Motor neuron (in vitro differentiated cells): ENCODE measurements at regions of chr19 and their contacts with region 1.

Region 1: GRCh38 chr19:16572332-16573211 is at the start of gene SLC35E1:
- ATAC-seq: peak; percentile 90 to 97 (median 94)
- H3K4me3 ChIP-seq: peak within 1 kb of the TSS; percentile 66 to 88 (median 74)
- H3K27ac ChIP-seq: peak within 1 kb of the TSS; percentile 88 to 96
- H3K4me1 ChIP-seq: peaks cover 14 to 30% of the 10 kb centered on the region in 2 donors
- total RNA-seq, gene SLC35E1: 19.5 to 37.4 (median 29.2) TPM

Region 2: GRCh38 chr19:16628183-16628983 is 55.8 kb after region 1 on chr19 and contains the start of gene MED26:
- in situ Hi-C with region 1: loop called in 1 of 9 experiments (anchors 10 kb)
- ATAC-seq: peak; percentile 80 to 94 (median 90)
- H3K4me3 ChIP-seq: peak within 1 kb of the TSS; percentile 64 to 88 (median 85)
- H3K27ac ChIP-seq: peak within 1 kb of the TSS; percentile 79 to 87
- H3K4me1 ChIP-seq: peaks cover 4 to 15% of the 10 kb centered on the region in 2 donors
- total RNA-seq, gene MED26: 5.2 to 18.5 (median 7.0) TPM